A549 (cell line): ENCODE measurements at regions of chr5 and their contacts with region 1.

Region 1: DNA sequence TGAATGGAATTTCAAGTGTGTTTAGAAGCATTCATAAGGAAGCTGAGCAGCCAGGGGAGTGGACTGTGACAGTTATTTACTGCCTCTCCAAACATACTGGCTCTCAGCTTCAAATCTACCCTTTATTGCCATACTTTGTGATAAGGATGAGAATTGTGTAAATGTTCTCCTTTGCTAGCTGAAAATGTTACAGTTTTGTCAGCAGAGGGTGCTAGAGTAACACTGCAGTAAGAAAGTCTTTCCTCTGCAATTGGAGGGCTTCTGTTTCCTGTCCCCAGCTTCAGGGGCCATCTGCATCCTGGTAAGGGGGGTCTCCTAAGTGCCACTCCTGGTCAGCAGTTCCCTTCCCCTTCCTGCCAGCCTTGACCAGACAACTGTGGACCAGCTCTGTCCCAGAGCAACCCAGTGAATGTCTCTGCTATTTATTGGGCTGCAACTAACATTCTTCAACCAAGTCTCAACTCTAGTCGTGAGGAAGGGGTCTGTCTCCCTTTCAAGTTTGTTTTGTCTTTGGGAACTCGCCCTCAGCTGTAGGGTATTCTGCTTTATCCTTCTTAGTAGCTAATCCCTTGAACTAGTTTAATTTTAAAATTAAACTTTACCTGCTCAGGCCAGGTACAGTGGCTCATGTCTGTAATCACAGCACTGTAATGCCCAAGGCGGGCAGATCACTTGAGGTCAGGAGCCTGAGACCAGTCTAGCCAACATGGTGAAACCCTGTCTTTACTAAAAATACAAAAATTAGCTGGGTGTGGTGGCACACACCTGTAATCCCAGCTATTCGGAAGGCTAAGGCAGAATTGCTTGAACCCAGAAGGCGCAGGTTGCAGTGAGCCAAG is 45.3 kb downstream of the RAPGEF6 start:
- DNase-seq: peak; percentile 36 to 59
- ATAC-seq: peak; percentile 73 to 93; a peak in 5 of 6 replicates
- H3K4me3 ChIP-seq: no peak overlapping the region
- H3K27ac ChIP-seq: no peak overlapping the region
- H3K4me1 ChIP-seq: no peaks in the 10 kb centered on the region
- CTCF ChIP-seq: peak; percentile 95
- EP300 ChIP-seq: no peak
- POLR2A ChIP-seq: no peak
- RAD21 ChIP-seq: peak; percentile 93

Region 2: DNA sequence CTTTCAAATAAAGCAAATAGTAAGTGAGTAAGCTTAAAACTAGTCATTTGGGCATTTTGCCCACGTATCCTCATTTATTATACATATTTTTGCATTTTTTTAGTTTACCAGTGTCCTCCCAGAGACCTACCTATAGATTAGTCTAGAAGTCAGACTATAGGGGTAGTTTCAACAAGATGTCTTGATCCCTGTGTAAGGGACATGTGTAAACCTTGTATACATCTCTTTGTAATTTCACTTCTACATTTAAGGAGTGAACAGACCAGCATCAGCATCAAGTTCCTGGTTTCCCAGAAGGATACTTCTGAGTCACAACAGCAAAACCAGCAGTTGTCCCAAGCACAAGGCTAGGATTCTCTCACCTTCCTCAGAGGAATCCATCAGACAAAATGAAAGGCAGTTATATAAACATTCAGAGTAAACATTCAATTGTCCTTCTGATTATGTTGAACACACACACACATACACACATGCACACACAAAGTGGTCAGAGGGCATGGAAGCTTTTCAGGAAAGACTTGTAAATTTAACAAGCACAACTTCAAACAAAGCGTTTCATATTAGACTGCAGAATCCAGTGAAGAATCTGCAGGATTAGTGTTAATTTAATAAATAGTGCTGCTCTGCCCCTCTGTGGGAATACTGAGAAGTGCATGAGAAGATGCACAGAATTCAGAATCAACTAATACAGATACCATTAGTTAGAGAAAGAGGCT is 480.0 kb before region 1 on chr5:
- CTCF ChIA-PET with region 1: no interaction called
- POLR2A ChIA-PET with region 1: no interaction called
- DNase-seq: peak; percentile 46 to 47
- ATAC-seq: peak; percentile 80 to 94; a peak in 5 of 6 replicates
- H3K4me3 ChIP-seq: no peak overlapping the region
- H3K27ac ChIP-seq: no peak overlapping the region
- H3K4me1 ChIP-seq: no peaks in the 10 kb centered on the region
- CTCF ChIP-seq: peak; percentile 90
- EP300 ChIP-seq: no peak
- POLR2A ChIP-seq: no peak
- RAD21 ChIP-seq: peak; percentile 89 to 92

Region 3: GRCh38 chr5:131170540-131171275 is 419.0 kb before region 1 on chr5 and contains the start of gene LYRM7:
- CTCF ChIA-PET with region 1: no interaction called
- POLR2A ChIA-PET with region 1: no interaction called
- DNase-seq: peak; percentile 92 to 99
- ATAC-seq: peak; percentile 98 to 99
- H3K4me3 ChIP-seq: peak within 1 kb of the TSS; percentile 55
- H3K27ac ChIP-seq: peak within 1 kb of the TSS; percentile 74 to 84
- H3K4me1 ChIP-seq: peaks cover 8% of the 10 kb centered on the region; the same call in 1 of the 3 replicates
- CTCF ChIP-seq: no peak
- EP300 ChIP-seq: no peak
- POLR2A ChIP-seq: peak; percentile 59
- RAD21 ChIP-seq: no peak
- polyA plus RNA-seq, gene LYRM7: 4.6 and 6.2 TPM in 2 replicates

Region 4: DNA sequence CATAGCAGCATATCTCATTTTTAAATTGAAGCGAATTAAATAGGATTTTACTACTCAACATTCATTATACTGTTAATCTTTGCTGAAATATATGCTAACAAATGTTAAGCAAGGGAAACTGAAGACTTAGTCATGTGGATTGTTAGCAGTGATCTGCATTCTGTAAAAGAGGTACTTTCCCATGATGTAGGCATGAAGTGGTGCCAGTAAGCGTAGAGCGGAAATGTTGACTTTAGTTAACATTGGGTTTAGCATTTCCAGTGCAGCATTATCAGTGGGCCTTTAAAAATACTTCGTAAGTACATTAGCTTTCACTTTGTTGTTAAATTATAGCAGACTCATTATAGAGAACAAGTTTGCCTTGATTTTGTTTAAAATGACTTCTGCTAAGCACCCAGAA is 195.6 kb before region 1 on chr5:
- CTCF ChIA-PET with region 1: no interaction called
- POLR2A ChIA-PET with region 1: no interaction called
- DNase-seq: no peak
- ATAC-seq: peak in 1 of 2 experiments; percentile 38; a peak in 1 of 6 replicates
- H3K4me3 ChIP-seq: no peak overlapping the region
- H3K27ac ChIP-seq: no peak overlapping the region
- H3K4me1 ChIP-seq: peaks cover 9% of the 10 kb centered on the region; the same call in 1 of the 3 replicates
- CTCF ChIP-seq: no peak
- EP300 ChIP-seq: no peak
- POLR2A ChIP-seq: no peak
- RAD21 ChIP-seq: no peak

Region 5: GRCh38 chr5:131605086-131605485 is 15.4 kb after region 1 on chr5:
- CTCF ChIA-PET with region 1: interaction called, 17 read pairs
- POLR2A ChIA-PET with region 1: no interaction called
- DNase-seq: no peak
- ATAC-seq: no peak
- H3K4me3 ChIP-seq: no peak overlapping the region
- H3K27ac ChIP-seq: no peak overlapping the region
- H3K4me1 ChIP-seq: peaks cover 11% of the 10 kb centered on the region; the same call in 2 of the 3 replicates
- CTCF ChIP-seq: no peak
- EP300 ChIP-seq: no peak
- POLR2A ChIP-seq: no peak
- RAD21 ChIP-seq: no peak

Region 6: GRCh38 chr5:131622633-131623032 is 32.9 kb after region 1 on chr5:
- CTCF ChIA-PET with region 1: interaction called, 18 read pairs
- POLR2A ChIA-PET with region 1: no interaction called
- DNase-seq: no peak
- ATAC-seq: no peak
- H3K4me3 ChIP-seq: no peak overlapping the region
- H3K27ac ChIP-seq: no peak overlapping the region
- H3K4me1 ChIP-seq: no peaks in the 10 kb centered on the region
- CTCF ChIP-seq: no peak
- EP300 ChIP-seq: no peak
- POLR2A ChIP-seq: no peak
- RAD21 ChIP-seq: no peak

Region 7: GRCh38 chr5:131877873-131878272 is 288.1 kb after region 1 on chr5:
- CTCF ChIA-PET with region 1: no interaction called
- POLR2A ChIA-PET with region 1: no interaction called
- DNase-seq: no peak
- ATAC-seq: peak; percentile 66 to 68; a peak in 4 of 6 replicates
- H3K4me3 ChIP-seq: no peak overlapping the region
- H3K27ac ChIP-seq: no peak overlapping the region
- H3K4me1 ChIP-seq: no peaks in the 10 kb centered on the region
- CTCF ChIP-seq: no peak
- EP300 ChIP-seq: no peak
- POLR2A ChIP-seq: no peak
- RAD21 ChIP-seq: no peak

Region 8: GRCh38 chr5:132001647-132002561 is 412.2 kb after region 1 on chr5:
- CTCF ChIA-PET with region 1: interaction called, 156 read pairs
- POLR2A ChIA-PET with region 1: no interaction called
- DNase-seq: no peak
- ATAC-seq: peak in 1 of 2 experiments; percentile 16; a peak in 1 of 6 replicates
- H3K4me3 ChIP-seq: no peak overlapping the region
- H3K27ac ChIP-seq: no peak overlapping the region
- H3K4me1 ChIP-seq: no peaks in the 10 kb centered on the region
- CTCF ChIP-seq: no peak
- EP300 ChIP-seq: no peak
- POLR2A ChIP-seq: no peak
- RAD21 ChIP-seq: no peak

Region 9: DNA sequence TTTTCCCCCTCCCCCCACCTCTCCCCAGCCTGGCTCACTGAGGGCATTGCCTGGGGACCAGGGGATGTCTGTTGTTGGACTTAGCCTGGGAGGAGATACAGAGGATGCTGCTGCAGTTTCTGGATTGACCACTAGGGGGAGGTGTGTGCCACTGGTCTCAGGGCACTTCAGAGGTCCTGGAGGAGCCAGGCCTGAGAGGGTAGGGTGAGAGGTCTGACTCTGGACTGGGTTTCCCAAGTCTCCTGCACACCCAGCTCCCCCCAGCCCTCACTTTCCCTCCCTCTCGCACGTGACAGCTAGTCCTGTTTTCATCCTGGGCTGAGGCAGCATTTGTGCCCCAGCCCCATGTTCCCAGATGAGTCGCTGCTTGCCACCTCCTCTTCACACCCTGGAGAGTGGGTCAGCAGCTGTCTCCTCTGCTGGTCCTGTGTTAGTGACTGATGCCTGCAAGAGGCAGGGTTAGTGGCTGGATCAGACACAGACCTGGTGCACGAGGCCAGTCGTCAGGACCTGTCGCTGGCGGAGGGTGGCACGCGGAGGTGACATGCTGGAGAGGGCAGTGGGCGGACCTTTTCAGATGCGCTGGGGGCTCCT is 475.1 kb after region 1 on chr5:
- CTCF ChIA-PET with region 1: interaction called, 32 read pairs
- POLR2A ChIA-PET with region 1: no interaction called
- DNase-seq: peak; percentile 78 to 84
- ATAC-seq: peak; percentile 84 to 93
- H3K4me3 ChIP-seq: no peak overlapping the region
- H3K27ac ChIP-seq: no peak overlapping the region
- H3K4me1 ChIP-seq: no peaks in the 10 kb centered on the region
- CTCF ChIP-seq: peak; percentile 73
- EP300 ChIP-seq: no peak
- POLR2A ChIP-seq: no peak
- RAD21 ChIP-seq: peak; percentile 56 to 73; a peak in 4 of 5 replicates